Breast epithelium (tissue), 4 donors: ENCODE measurements at regions of chr1 and their contacts with region 1.

Region 1: GRCh38 chr1:189499736-189500135 is 977.9 kb downstream of the BRINP3 start:
- DNase-seq: no peak
- H3K4me3 ChIP-seq: no peak overlapping the region
- H3K27ac ChIP-seq: no peak overlapping the region
- H3K4me1 ChIP-seq: no peaks in the 10 kb centered on the region
- H3K27me3 ChIP-seq: no peaks in the 10 kb centered on the region
- CTCF ChIP-seq: no peak
- POLR2A ChIP-seq: no peak

Region 2: DNA sequence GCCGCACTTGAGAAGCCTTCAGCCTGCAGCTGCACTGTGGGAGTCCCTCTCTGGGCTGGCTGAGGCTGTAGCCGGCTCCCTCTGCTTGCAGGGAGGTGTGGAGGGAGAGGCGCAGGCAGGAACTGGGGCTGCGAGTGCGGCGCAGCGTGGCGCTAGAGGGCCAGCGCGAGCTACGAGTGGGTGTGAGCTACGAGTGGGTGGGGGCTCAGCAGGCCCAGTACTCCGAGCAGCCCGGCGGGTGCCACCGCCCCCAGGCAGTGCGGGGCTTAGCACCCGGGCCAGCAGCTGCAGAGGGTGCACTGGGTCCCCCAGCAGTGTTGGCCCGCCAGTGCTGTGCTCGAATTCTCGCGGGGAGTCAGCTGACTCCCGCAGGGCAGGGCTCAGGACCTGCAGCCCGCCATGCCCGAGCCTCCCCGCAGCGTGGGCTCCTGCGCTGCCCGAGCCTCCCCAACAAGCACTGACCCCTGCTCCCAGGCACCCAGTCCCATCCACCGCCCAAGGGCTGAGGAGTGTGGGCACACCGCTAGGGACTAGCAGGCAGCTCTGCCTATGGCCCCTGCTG is 642.1 kb before region 1 on chr1:
- intact Hi-C with region 1: loop called (anchors 5 kb)
- DNase-seq: no peak
- H3K4me3 ChIP-seq: no peak overlapping the region
- H3K27ac ChIP-seq: no peak overlapping the region
- H3K4me1 ChIP-seq: no peaks in the 10 kb centered on the region
- H3K27me3 ChIP-seq: no peaks in the 10 kb centered on the region
- CTCF ChIP-seq: no peak
- POLR2A ChIP-seq: no peak

Region 3: DNA sequence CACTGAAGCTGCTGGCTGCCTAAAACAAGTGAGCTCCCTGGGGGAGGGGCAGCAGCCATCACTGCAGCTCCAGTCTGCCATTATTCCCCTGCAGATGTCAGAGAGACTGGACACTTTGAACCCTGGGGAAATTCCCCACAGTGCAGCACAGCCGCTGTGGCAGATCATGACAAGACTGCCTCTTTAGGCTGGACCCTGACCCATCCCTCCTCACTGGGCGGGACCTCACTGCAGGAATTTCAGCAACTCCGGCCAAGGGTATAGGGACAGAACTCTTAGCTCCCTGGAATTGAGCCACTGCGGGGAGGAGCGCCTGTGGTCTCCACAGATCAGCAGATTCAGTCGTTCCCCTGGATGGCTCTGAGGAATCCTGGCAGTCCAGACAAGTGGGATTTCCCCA is 13.4 kb after region 1 on chr1:
- intact Hi-C with region 1: no loop called
- DNase-seq: no peak
- H3K4me3 ChIP-seq: no peak overlapping the region
- H3K27ac ChIP-seq: no peak overlapping the region
- H3K4me1 ChIP-seq: no peaks in the 10 kb centered on the region
- H3K27me3 ChIP-seq: no peaks in the 10 kb centered on the region
- CTCF ChIP-seq: no peak
- POLR2A ChIP-seq: no peak

Region 4: GRCh38 chr1:189567890-189568289 is 68.2 kb after region 1 on chr1:
- intact Hi-C with region 1: no loop called
- DNase-seq: no peak
- H3K4me3 ChIP-seq: no peak overlapping the region
- H3K27ac ChIP-seq: no peak overlapping the region
- H3K4me1 ChIP-seq: no peaks in the 10 kb centered on the region
- H3K27me3 ChIP-seq: no peaks in the 10 kb centered on the region
- CTCF ChIP-seq: no peak
- POLR2A ChIP-seq: no peak